Heart right ventricle (tissue), 16 donors: ENCODE measurements at regions of chr4 and their contacts with region 1.

Region 1: GRCh38 chr4:149264093-149264733 is 551.4 kb downstream of the IQCM start:
- DNase-seq: peak in 1 of 2 donors; percentile 7
- ATAC-seq: peak in 4 of 8 donors; percentile 44 to 65 (median 60)
- H3K4me3 ChIP-seq: no peak overlapping the region
- H3K27ac ChIP-seq: no peak overlapping the region
- H3K4me1 ChIP-seq: no peaks in the 10 kb centered on the region
- H3K27me3 ChIP-seq: no peaks in the 10 kb centered on the region
- CTCF ChIP-seq: peak; percentile 11 to 74 (median 66)

Region 2: GRCh38 chr4:149056615-149057014 is 207.6 kb before region 1 on chr4:
- intact Hi-C with region 1: no loop called
- DNase-seq: no peak
- ATAC-seq: no peak
- H3K4me3 ChIP-seq: no peak overlapping the region
- H3K27ac ChIP-seq: no peak overlapping the region
- H3K4me1 ChIP-seq: no peaks in the 10 kb centered on the region
- H3K27me3 ChIP-seq: no peaks in the 10 kb centered on the region
- CTCF ChIP-seq: no peak

Region 3: DNA sequence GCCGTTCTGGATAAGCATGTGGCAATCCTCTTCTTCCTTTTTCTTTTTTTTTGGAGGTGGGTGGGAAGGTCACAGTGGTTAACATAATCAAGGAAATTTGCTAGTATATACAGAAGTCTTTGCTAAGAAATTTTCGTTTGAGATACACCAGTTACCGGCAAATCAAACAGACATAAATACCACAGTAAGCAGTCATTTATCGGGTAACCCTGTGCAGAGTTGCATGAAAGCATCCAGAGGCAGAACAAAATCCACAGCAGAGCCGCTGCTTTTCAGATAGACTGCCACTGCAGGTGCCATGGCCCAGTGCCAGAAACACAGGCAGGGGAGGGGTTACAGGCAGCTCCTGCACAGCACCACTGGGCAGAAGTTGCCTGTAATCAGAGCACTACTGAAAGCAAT is 1138.7 kb after region 1 on chr4:
- intact Hi-C with region 1: loop called in 1 of 10 experiments (anchors 5 kb)
- DNase-seq: peak; percentile 42 to 49
- ATAC-seq: peak in 4 of 8 donors; percentile 51 to 75 (median 62)
- H3K4me3 ChIP-seq: no peak overlapping the region
- H3K27ac ChIP-seq: no peak overlapping the region
- H3K4me1 ChIP-seq: peaks cover 0 to 5% (median 0%) of the 10 kb centered on the region in 9 donors
- H3K27me3 ChIP-seq: no peaks in the 10 kb centered on the region
- CTCF ChIP-seq: no peak